GM12878 (cell line): ENCODE measurements at regions of chr7 and their contacts with region 1.

Region 1: GRCh38 chr7:70763961-70764691 is 367.8 kb upstream of the GALNT17 start:
- DNase-seq: peak; percentile 98
- ATAC-seq: peak; percentile 88
- H3K4me3 ChIP-seq: peak overlapping the region; percentile 54
- H3K27ac ChIP-seq: peak overlapping the region; percentile 98
- H3K4me1 ChIP-seq: peaks cover 43% of the 10 kb centered on the region
- H3K27me3 ChIP-seq: no peaks in the 10 kb centered on the region
- CTCF ChIP-seq: no peak
- EP300 ChIP-seq: peak in 1 of 2 experiments; percentile 72
- POLR2A ChIP-seq: peak; percentile 27; the same call in 1 of the 2 replicates
- RAD21 ChIP-seq: 0 out of 2 replicates have a peak, but pooled peaks have one; percentile 16

Region 2: DNA sequence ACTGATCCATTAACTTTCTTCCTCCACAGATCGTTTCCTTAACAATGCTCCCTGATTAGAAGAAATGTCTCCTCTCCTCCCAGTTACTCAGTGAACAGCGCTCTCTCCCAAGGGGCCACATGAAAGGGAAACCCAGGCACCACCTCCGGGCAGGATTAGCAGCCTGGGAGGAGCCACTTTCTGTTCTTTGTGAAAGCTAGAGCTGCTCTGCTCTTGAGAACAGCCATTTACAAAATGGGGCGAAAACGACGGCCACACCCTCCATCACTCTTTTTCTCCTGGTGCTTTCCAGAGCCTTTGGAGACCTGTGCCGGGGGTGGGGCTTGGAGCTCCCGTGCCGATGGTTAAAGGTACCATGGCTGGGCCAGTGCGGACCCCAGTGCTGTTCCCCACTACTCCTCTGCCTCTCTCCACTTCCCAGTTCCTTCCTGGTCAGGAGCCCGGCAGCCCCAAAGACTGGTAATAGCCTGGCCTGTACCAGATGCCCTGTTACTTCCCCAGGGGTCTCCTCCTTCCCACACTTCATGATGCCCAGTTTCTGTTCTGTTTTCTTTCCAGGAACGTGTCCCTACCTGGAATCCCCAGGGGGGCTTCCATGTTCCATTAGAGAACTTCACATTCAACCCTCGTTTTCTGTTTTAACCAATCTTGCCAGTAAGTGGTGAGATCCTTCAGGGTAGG is 35.1 kb before region 1 on chr7:
- CTCF ChIA-PET with region 1: interaction called, 9 read pairs
- POLR2A ChIA-PET with region 1: interaction called, 9 read pairs
- RAD21 ChIA-PET with region 1: interaction called, 15 read pairs
- SMC1A ChIA-PET with region 1: interaction called, 51 read pairs
- in situ Hi-C with region 1: loop called (anchors 5 kb)
- intact Hi-C with region 1: loop called (anchors 1 kb)
- DNase-seq: no peak
- ATAC-seq: peak; percentile 34
- H3K4me3 ChIP-seq: peak overlapping the region; percentile 13; the same call in 1 of the 2 replicates
- H3K27ac ChIP-seq: peak overlapping the region; percentile 89
- H3K4me1 ChIP-seq: peaks cover 37% of the 10 kb centered on the region
- H3K27me3 ChIP-seq: no peaks in the 10 kb centered on the region
- CTCF ChIP-seq: no peak
- EP300 ChIP-seq: no peak
- POLR2A ChIP-seq: peak; percentile 49
- RAD21 ChIP-seq: no peak

Region 3: GRCh38 chr7:70749831-70750230 is 14.3 kb before region 1 on chr7:
- CTCF ChIA-PET with region 1: interaction called, 3 read pairs
- POLR2A ChIA-PET with region 1: interaction called, 4 read pairs
- RAD21 ChIA-PET with region 1: interaction called, 4 read pairs
- SMC1A ChIA-PET with region 1: interaction called, 41 read pairs
- in situ Hi-C with region 1: no loop called
- intact Hi-C with region 1: no loop called
- DNase-seq: no peak
- ATAC-seq: no peak
- H3K4me3 ChIP-seq: no peak overlapping the region
- H3K27ac ChIP-seq: no peak overlapping the region
- H3K4me1 ChIP-seq: no peaks in the 10 kb centered on the region
- H3K27me3 ChIP-seq: no peaks in the 10 kb centered on the region
- CTCF ChIP-seq: no peak
- EP300 ChIP-seq: no peak
- POLR2A ChIP-seq: no peak
- RAD21 ChIP-seq: no peak